Naive thymus-derived CD4-positive, alpha-beta T cell (primary cell): ENCODE measurements at regions of chr21 and their contacts with region 1.

Region 1: GRCh38 chr21:25734904-25735645 is at the starts of genes ATP5PF and GABPA:
- DNase-seq: peak; percentile 95 to 99 (median 97)
- ATAC-seq: peak; percentile 96
- H3K4me3 ChIP-seq: peak within 1 kb of the TSS; percentile 96
- H3K4me3 Mint-ChIP-seq: peak within 1 kb of the TSS; percentile 98 to 100 (median 100)
- H3K27ac ChIP-seq: peak within 1 kb of the TSS; percentile 88
- H3K27ac Mint-ChIP-seq: peak within 1 kb of the TSS; percentile 98 to 100 (median 100)
- H3K4me1 ChIP-seq: peaks cover 0 to 13% of the 10 kb centered on the region in 2 donors
- H3K4me1 Mint-ChIP-seq: peaks cover 35 to 78% (median 64%) of the 10 kb centered on the region in 7 donors
- H3K27me3 ChIP-seq: no peaks in the 10 kb centered on the region
- H3K27me3 Mint-ChIP-seq: peaks cover 0 to 4% (median 0%) of the 10 kb centered on the region in 5 donors
- total RNA-seq, gene ATP5PF: 39.5 to 124 (median 58.6) TPM
- total RNA-seq, gene GABPA: 23.1 to 31.9 (median 29.4) TPM

Region 2: DNA sequence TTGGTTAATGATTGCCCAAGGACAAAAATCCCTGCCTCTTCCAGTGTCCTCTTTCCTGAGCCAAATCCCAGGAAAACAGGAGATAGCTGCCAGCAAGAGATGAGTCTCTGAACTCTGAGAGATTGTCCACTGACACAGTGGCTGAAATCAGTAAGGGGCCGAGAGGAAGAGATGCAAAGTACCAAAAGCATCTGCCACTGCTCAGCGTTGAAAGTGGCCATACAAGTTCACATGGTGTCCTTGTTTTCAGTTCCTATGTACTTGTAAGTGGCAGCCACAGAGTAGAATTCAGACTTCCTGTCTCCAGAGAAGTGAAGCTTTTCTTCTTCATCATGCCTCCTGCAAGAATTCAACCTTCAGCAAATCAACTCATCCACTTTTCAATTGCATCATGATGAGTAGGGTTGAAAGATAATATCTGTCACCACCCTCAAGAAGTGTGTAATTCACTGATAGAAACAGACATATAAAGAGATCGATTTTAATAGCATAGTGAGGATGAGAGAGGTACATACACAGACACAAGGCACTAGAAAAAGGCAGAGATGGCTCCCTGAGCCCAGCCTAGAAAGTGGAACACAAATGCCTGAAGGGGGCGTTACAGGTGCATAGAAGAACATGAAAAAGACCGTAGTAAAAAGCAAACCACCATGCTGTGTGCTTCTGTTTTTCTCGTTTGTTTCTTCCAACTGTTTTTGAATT is 313.6 kb before region 1 on chr21:
- CTCF ChIA-PET with region 1: no interaction called
- POLR2A ChIA-PET with region 1: no interaction called
- intact Hi-C with region 1: loop called in 1 of 2 experiments (anchors 1 kb)
- DNase-seq: peak in 8 of 9 donors; percentile 18 to 50 (median 40)
- ATAC-seq: peak; percentile 91
- H3K4me3 ChIP-seq: no peak overlapping the region
- H3K4me3 Mint-ChIP-seq: peak overlapping the region in 6 of 10 donors; percentile 7 to 88 (median 56)
- H3K27ac ChIP-seq: no peak overlapping the region
- H3K27ac Mint-ChIP-seq: peak overlapping the region in 7 of 9 donors; percentile 1 to 84 (median 41)
- H3K4me1 ChIP-seq: peaks cover 6 to 7% of the 10 kb centered on the region in 2 donors
- H3K4me1 Mint-ChIP-seq: peaks cover 4 to 25% (median 12%) of the 10 kb centered on the region in 7 donors
- H3K27me3 ChIP-seq: no peaks in the 10 kb centered on the region
- H3K27me3 Mint-ChIP-seq: peaks cover 0 to 6% (median 0%) of the 10 kb centered on the region in 5 donors

Region 3: GRCh38 chr21:25561668-25562641 is 173.1 kb before region 1 on chr21:
- CTCF ChIA-PET with region 1: no interaction called
- POLR2A ChIA-PET with region 1: interaction called, 3 read pairs
- intact Hi-C with region 1: loop called (anchors 1 to 2 kb)
- DNase-seq: peak; percentile 12 to 93 (median 43)
- ATAC-seq: peak; percentile 74
- H3K4me3 ChIP-seq: peak overlapping the region; percentile 34
- H3K4me3 Mint-ChIP-seq: peak overlapping the region; percentile 88 to 98 (median 94)
- H3K27ac ChIP-seq: peak overlapping the region; percentile 61
- H3K27ac Mint-ChIP-seq: peak overlapping the region; percentile 69 to 96 (median 92)
- H3K4me1 ChIP-seq: peaks cover 11 to 29% of the 10 kb centered on the region in 2 donors
- H3K4me1 Mint-ChIP-seq: peaks cover 27 to 68% (median 50%) of the 10 kb centered on the region in 7 donors
- H3K27me3 ChIP-seq: no peaks in the 10 kb centered on the region
- H3K27me3 Mint-ChIP-seq: no peaks in the 10 kb centered on the region

Region 4: DNA sequence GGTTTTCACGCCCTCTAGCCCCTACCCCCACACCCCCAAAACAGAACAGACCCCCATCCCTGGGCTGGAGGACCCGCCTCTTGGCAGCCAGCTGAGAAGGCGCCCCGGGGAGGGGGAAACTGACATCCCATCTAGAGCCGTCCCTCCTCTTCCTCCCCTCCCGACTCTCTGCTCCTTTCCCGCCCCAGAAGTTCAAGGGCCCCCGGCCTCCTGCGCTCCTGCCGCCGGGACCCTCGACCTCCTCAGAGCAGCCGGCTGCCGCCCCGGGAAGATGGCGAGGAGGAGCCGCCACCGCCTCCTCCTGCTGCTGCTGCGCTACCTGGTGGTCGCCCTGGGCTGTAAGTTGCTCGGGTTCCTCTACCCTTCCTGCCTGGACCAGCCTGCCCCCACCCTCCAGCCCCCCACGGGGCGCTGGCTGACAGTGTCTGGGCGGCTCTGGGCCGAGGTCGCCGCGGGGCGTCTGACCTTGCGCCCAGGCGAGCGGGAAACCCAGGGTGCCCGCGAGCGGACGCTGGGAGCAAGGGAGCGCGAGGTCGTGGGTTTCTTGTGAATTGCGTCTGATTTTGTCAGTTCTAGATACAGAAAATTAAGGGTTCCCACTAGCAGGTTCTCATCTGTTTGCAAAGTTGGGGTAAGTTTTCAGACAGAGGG is 95.4 kb before region 1 on chr21:
- CTCF ChIA-PET with region 1: no interaction called
- POLR2A ChIA-PET with region 1: no interaction called
- intact Hi-C with region 1: loop called in 1 of 2 experiments (anchors 1 kb)
- DNase-seq: peak; percentile 19 to 54 (median 38)
- ATAC-seq: peak; percentile 89
- H3K4me3 ChIP-seq: peak overlapping the region; percentile 68
- H3K4me3 Mint-ChIP-seq: peak overlapping the region; percentile 74 to 88 (median 82)
- H3K27ac ChIP-seq: peak overlapping the region; percentile 9
- H3K27ac Mint-ChIP-seq: no peak overlapping the region
- H3K4me1 ChIP-seq: peaks cover 0 to 10% of the 10 kb centered on the region in 2 donors
- H3K4me1 Mint-ChIP-seq: peaks cover 14 to 22% (median 17%) of the 10 kb centered on the region in 7 donors
- H3K27me3 ChIP-seq: no peaks in the 10 kb centered on the region
- H3K27me3 Mint-ChIP-seq: peaks cover 20 to 47% (median 38%) of the 10 kb centered on the region in 5 donors

Region 5: GRCh38 chr21:25750085-25750484 is 15.0 kb after region 1 on chr21:
- CTCF ChIA-PET with region 1: interaction called, 3 read pairs
- POLR2A ChIA-PET with region 1: interaction called, 4 read pairs
- intact Hi-C with region 1: loop called in 1 of 2 experiments (anchors 2 kb)
- DNase-seq: peak in 2 of 9 donors; percentile 8 to 11
- ATAC-seq: peak; percentile 18
- H3K4me3 ChIP-seq: no peak overlapping the region
- H3K4me3 Mint-ChIP-seq: peak overlapping the region in 7 of 10 donors; percentile 34 to 71 (median 42)
- H3K27ac ChIP-seq: no peak overlapping the region
- H3K27ac Mint-ChIP-seq: peak overlapping the region; percentile 37 to 94 (median 84)
- H3K4me1 ChIP-seq: no peaks in the 10 kb centered on the region
- H3K4me1 Mint-ChIP-seq: peaks cover 7 to 29% (median 13%) of the 10 kb centered on the region in 7 donors
- H3K27me3 ChIP-seq: no peaks in the 10 kb centered on the region
- H3K27me3 Mint-ChIP-seq: no peaks in the 10 kb centered on the region

Region 6: DNA sequence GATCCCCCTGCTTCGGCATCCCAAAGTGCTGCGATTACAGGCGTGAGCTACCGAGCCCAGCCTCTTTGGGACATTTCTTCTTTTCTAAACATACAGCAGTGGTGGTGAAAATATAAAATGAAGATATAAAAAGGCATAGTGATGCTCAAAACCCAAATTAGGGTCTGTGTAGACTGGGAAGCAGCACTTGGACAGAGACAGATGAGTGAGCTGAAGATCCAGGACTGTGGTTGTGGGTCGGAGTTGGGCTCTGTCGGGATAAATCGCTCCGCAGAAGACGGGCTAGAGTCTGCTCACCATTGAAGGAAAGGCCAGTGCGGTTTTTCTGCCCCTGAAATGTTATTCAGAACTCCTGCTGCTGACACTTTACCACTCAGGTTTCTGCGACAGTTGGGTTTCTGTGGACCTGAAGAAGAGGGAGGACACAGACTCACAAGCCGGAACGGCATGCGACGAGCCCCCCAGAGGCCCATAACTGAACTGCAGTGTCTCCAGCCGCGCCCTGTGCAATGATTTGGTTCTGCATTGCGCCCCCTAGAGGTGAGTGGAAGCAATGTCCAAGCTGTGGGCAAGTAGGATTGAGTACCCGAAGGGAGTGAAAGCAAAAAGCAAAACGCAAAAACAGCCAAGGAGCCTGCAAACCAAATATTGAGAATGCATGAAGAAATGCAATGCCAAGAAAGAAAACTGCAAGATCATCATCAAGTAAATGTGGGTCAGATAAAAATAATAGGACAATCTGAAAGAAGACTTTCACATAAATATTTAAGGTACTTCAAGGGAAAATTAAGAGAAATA is 66.3 kb after region 1 on chr21:
- CTCF ChIA-PET with region 1: no interaction called
- POLR2A ChIA-PET with region 1: no interaction called
- intact Hi-C with region 1: loop called (anchors 1 kb)
- DNase-seq: peak; percentile 66 to 89 (median 84)
- ATAC-seq: peak; percentile 100
- H3K4me3 ChIP-seq: no peak overlapping the region
- H3K4me3 Mint-ChIP-seq: peak overlapping the region in 8 of 10 donors; percentile 7 to 78 (median 60)
- H3K27ac ChIP-seq: no peak overlapping the region
- H3K27ac Mint-ChIP-seq: peak overlapping the region in 3 of 9 donors; percentile 7 to 15 (median 10)
- H3K4me1 ChIP-seq: no peaks in the 10 kb centered on the region
- H3K4me1 Mint-ChIP-seq: peaks cover 2 to 10% (median 7%) of the 10 kb centered on the region in 7 donors
- H3K27me3 ChIP-seq: no peaks in the 10 kb centered on the region
- H3K27me3 Mint-ChIP-seq: peaks cover 5 to 31% (median 19%) of the 10 kb centered on the region in 5 donors

Region 7: GRCh38 chr21:26140185-26140584 is 405.1 kb after region 1 on chr21:
- CTCF ChIA-PET with region 1: no interaction called
- POLR2A ChIA-PET with region 1: no interaction called
- intact Hi-C with region 1: no loop called
- DNase-seq: no peak
- ATAC-seq: peak; percentile 81
- H3K4me3 ChIP-seq: no peak overlapping the region
- H3K4me3 Mint-ChIP-seq: no peak overlapping the region
- H3K27ac ChIP-seq: no peak overlapping the region
- H3K27ac Mint-ChIP-seq: no peak overlapping the region
- H3K4me1 ChIP-seq: peaks cover 0 to 3% of the 10 kb centered on the region in 2 donors
- H3K4me1 Mint-ChIP-seq: peaks cover 10 to 29% (median 13%) of the 10 kb centered on the region in 7 donors
- H3K27me3 ChIP-seq: no peaks in the 10 kb centered on the region
- H3K27me3 Mint-ChIP-seq: no peaks in the 10 kb centered on the region